ENCODE measurements at regions of chr22 and their contacts with region 1.

Region 1: GRCh38 chr22:36775964-36776669 is at the start of gene IFT27:
- DNase-seq: peak; percentile 97 to 99
- ATAC-seq: peak; percentile 98
- H3K4me3 ChIP-seq: peak within 1 kb of the TSS; percentile 89
- H3K27ac ChIP-seq: peak within 1 kb of the TSS; percentile 86 to 93
- H3K4me1 ChIP-seq: peaks cover 17% of the 10 kb centered on the region; the same call in 2 of the 3 replicates
- CTCF ChIP-seq: no peak
- EP300 ChIP-seq: no peak
- POLR2A ChIP-seq: peak; percentile 66
- RAD21 ChIP-seq: no peak
- polyA plus RNA-seq, gene IFT27: 24.6 and 26.4 TPM in 2 replicates

Region 2: GRCh38 chr22:36546092-36546804 is 229.9 kb before region 1 on chr22:
- CTCF ChIA-PET with region 1: interaction called, 15 read pairs
- POLR2A ChIA-PET with region 1: interaction called, 8 read pairs
- DNase-seq: peak; percentile 67 to 78
- ATAC-seq: peak; percentile 76 to 84
- H3K4me3 ChIP-seq: peak overlapping the region; percentile 36
- H3K27ac ChIP-seq: peak overlapping the region; percentile 58 to 79
- H3K4me1 ChIP-seq: peaks cover 34% of the 10 kb centered on the region
- CTCF ChIP-seq: peak; percentile 80
- EP300 ChIP-seq: no peak
- POLR2A ChIP-seq: no peak
- RAD21 ChIP-seq: peak; percentile 73 to 94

Region 3: DNA sequence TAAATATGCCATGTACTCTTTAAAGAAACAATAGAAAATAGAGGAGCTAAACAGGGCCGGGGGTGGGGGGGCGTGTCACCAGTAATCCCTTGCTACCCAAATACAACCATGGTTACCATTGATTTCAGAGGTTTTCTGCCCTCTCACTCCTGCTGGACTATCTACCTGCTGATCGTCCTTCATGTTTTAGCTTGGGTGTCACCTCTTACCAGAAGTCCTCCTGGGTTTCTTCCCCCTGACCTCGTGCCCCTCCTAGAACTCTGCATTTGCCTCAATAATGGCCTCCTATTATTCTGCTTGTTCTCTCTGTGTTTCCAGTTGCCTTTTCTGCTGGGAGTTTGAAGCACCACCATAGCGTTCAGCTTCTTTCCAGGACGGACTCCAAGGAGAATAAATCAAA is 50.1 kb after region 1 on chr22:
- CTCF ChIA-PET with region 1: no interaction called
- POLR2A ChIA-PET with region 1: no interaction called
- DNase-seq: no peak
- ATAC-seq: no peak
- H3K4me3 ChIP-seq: no peak overlapping the region
- H3K27ac ChIP-seq: no peak overlapping the region
- H3K4me1 ChIP-seq: no peaks in the 10 kb centered on the region
- CTCF ChIP-seq: no peak
- EP300 ChIP-seq: no peak
- POLR2A ChIP-seq: no peak
- RAD21 ChIP-seq: no peak